MCF 10A (cell line): ENCODE measurements at regions of chr11 and their contacts with region 1.

Region 1: GRCh38 chr11:3849297-3849874 is 6.1 kb upstream of the STIM1 start:
- DNase-seq: peak; percentile 66
- H3K4me3 Mint-ChIP-seq: no peak overlapping the region
- H3K27ac Mint-ChIP-seq: no peak overlapping the region
- H3K4me1 Mint-ChIP-seq: peaks cover 5% of the 10 kb centered on the region
- H3K27me3 Mint-ChIP-seq: peaks cover 10% of the 10 kb centered on the region
- CTCF ChIP-seq: peak; percentile 52

Region 2: GRCh38 chr11:3927133-3927796 is 77.9 kb after region 1 on chr11:
- CTCF ChIA-PET with region 1: interaction called, 19 read pairs
- POLR2A ChIA-PET with region 1: interaction called, 7 read pairs
- intact Hi-C with region 1: no loop called
- DNase-seq: no peak
- H3K4me3 Mint-ChIP-seq: no peak overlapping the region
- H3K27ac Mint-ChIP-seq: no peak overlapping the region
- H3K4me1 Mint-ChIP-seq: no peaks in the 10 kb centered on the region
- H3K27me3 Mint-ChIP-seq: no peaks in the 10 kb centered on the region
- CTCF ChIP-seq: no peak

Region 3: DNA sequence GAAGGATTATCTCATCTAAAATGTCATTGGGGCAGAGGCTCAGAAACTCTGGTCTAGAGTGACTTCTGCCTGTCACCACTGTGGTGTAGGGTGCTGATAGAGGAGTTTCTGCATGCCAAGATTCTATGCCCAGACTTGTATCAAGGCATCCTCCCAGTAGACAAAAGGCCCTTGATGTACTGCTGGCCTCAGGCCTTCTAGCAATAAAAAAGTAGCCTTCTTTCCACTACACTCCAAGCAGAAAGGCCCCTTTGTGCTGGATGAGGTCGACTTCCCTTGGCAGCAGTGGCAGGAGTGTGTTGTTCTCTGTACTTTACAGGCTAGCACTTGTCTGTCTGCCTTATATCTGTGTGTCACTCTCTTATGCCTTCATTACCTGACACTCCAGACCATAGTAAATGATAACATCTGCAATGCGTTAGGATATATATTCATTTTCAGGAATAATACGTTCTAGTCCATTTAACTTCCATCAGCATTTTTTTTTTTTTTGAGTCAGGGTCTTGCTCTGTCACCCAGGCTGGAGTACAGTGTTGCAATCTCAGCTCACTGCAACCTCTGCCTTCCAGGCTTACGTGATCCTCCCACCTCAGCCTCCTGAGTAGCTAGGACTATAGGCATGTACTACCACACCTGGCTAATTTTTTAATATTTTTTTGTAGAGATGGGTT is 195.7 kb after region 1 on chr11:
- CTCF ChIA-PET with region 1: interaction called, 60 read pairs
- POLR2A ChIA-PET with region 1: interaction called, 17 read pairs
- intact Hi-C with region 1: no loop called
- DNase-seq: peak; percentile 57
- H3K4me3 Mint-ChIP-seq: no peak overlapping the region
- H3K27ac Mint-ChIP-seq: peak overlapping the region; percentile 64
- H3K4me1 Mint-ChIP-seq: peaks cover 24% of the 10 kb centered on the region
- H3K27me3 Mint-ChIP-seq: no peaks in the 10 kb centered on the region
- CTCF ChIP-seq: no peak

Region 4: GRCh38 chr11:4060182-4060923 is 211.0 kb after region 1 on chr11:
- CTCF ChIA-PET with region 1: interaction called, 1,105 read pairs
- POLR2A ChIA-PET with region 1: interaction called, 9 read pairs
- intact Hi-C with region 1: no loop called
- DNase-seq: no peak
- H3K4me3 Mint-ChIP-seq: no peak overlapping the region
- H3K27ac Mint-ChIP-seq: no peak overlapping the region
- H3K4me1 Mint-ChIP-seq: no peaks in the 10 kb centered on the region
- H3K27me3 Mint-ChIP-seq: no peaks in the 10 kb centered on the region
- CTCF ChIP-seq: no peak